IMR-90 (cell line): ENCODE measurements at regions of chr22 and their contacts with region 1.

Region 1: DNA sequence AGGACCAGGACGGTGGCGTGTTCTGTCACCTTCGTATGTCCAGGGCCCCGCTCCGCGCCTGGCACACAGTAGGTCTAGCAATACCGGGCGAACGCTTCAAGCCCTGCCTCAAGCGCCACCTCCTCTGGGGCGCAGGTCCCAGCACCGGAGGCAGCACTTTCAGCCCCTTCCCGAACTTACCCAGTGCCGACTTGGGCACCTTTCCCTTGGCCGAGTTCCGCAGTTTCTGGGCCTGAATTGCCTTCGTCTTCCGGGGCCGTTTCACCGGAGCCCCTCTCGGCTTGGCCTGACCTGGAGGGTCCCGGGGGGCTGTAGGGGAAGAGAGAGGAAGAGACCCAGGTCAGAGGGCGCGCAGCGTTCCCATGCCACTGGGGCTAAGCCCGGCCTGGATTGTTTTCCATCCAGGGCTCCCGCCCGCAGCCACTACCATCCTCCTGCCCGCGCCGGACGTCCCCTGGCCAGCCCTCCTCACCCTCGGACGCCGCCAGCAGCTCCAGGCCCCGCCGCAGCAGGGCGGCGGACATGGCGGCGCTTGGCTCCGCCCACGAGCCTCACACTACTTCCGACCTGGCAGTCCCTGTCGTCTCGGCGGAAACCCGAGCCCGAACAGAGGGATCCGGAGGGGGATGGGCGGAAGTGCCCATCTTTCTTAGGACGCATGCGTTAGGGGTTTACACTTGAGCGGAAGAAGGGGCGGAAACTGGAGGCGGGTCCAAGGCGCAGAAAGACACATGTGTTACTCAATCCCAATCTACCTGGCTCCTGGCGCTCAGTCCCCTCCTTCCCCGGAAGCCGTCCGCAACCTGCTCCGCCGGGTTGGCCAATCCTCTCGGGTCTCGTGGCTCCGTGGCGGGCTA is at the start of gene RPS19BP1:
- DNase-seq: peak; percentile 99
- ATAC-seq: peak; percentile 79
- H3K4me3 ChIP-seq: peak within 1 kb of the TSS; percentile 74
- H3K27ac ChIP-seq: peak within 1 kb of the TSS; percentile 85
- H3K4me1 ChIP-seq: peaks cover 7% of the 10 kb centered on the region
- H3K27me3 ChIP-seq: no peaks in the 10 kb centered on the region
- CTCF ChIP-seq: no peak
- POLR2A ChIP-seq: peak; percentile 78
- RAD21 ChIP-seq: no peak
- total RNA-seq, gene RPS19BP1: 33.0 and 33.6 TPM in 2 replicates

Region 2: GRCh38 chr22:39428578-39429071 is 103.8 kb before region 1 on chr22:
- CTCF ChIA-PET with region 1: no interaction called
- POLR2A ChIA-PET with region 1: no interaction called
- dilution Hi-C with region 1: no loop called
- in situ Hi-C with region 1: no loop called
- intact Hi-C with region 1: no loop called
- DNase-seq: no peak
- ATAC-seq: peak; percentile 70
- H3K4me3 ChIP-seq: no peak overlapping the region
- H3K27ac ChIP-seq: no peak overlapping the region
- H3K4me1 ChIP-seq: peaks cover 4% of the 10 kb centered on the region; the same call in 1 of the 2 replicates
- H3K27me3 ChIP-seq: no peaks in the 10 kb centered on the region
- CTCF ChIP-seq: no peak
- POLR2A ChIP-seq: no peak
- RAD21 ChIP-seq: no peak

Region 3: GRCh38 chr22:39490135-39490798 is 42.2 kb before region 1 on chr22:
- CTCF ChIA-PET with region 1: interaction called, 14 read pairs
- POLR2A ChIA-PET with region 1: no interaction called
- dilution Hi-C with region 1: no loop called
- in situ Hi-C with region 1: no loop called
- intact Hi-C with region 1: no loop called
- DNase-seq: peak; percentile 65
- ATAC-seq: peak; percentile 79
- H3K4me3 ChIP-seq: no peak overlapping the region
- H3K27ac ChIP-seq: no peak overlapping the region
- H3K4me1 ChIP-seq: peaks cover 8% of the 10 kb centered on the region
- H3K27me3 ChIP-seq: no peaks in the 10 kb centered on the region
- CTCF ChIP-seq: no peak
- POLR2A ChIP-seq: no peak
- RAD21 ChIP-seq: no peak

Region 4: DNA sequence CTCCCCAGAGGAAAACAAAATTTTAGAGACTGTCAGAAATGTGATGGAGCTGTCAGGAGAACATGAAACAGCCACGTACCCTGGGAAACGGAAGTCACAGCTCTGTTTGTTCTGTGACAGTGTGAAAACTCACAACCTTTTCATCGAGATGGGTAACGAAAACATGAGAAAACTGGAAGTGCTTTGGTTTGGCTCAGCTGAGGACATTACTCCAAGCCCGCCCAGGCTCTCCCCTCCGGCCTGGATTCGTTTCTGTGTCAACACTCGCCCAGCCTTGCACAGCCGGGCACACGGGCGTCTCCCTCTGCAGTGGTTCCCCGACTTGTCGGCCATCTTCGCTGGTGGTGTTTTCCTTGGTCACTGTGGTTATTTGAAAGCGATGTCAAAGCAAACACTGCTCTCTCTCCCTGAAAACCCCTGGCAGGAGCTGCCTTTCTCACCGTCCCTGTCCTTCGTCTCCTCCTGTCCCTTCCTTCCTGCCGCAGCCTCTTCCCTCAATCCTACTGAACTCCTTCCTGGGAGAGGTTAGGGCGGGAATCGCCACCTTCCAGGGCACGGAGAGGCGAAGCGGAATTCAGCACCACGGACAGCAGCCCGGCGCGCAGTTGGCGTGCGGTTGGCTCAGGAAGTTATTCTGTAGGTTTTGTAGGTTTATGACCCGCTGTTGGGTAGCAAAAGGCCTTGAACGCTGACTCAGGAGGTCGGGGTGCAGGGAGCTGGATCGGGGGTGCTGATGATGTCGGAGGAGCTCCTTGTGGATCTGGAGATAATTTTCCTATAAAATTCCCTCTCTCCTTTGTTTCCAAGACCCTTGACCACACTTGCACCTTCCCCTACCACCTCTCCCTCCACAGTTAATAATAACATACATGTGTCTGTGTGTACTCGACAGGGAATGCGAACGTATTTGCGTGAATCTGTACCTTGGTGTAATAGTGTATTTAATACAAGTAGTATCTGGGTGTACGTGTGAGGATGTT is 13.2 kb after region 1 on chr22:
- CTCF ChIA-PET with region 1: interaction called, 12 read pairs
- POLR2A ChIA-PET with region 1: interaction called, 5 read pairs
- dilution Hi-C with region 1: no loop called
- in situ Hi-C with region 1: no loop called
- intact Hi-C with region 1: no loop called
- DNase-seq: no peak
- ATAC-seq: peak; percentile 33; the same call in 1 of the 2 replicates
- H3K4me3 ChIP-seq: no peak overlapping the region
- H3K27ac ChIP-seq: no peak overlapping the region
- H3K4me1 ChIP-seq: peaks cover 3% of the 10 kb centered on the region; the same call in 1 of the 2 replicates
- H3K27me3 ChIP-seq: peaks cover 30% of the 10 kb centered on the region
- CTCF ChIP-seq: no peak
- POLR2A ChIP-seq: no peak
- RAD21 ChIP-seq: no peak

Region 5: GRCh38 chr22:40024201-40025061 is 492.0 kb after region 1 on chr22:
- CTCF ChIA-PET with region 1: interaction called, 29 read pairs
- POLR2A ChIA-PET with region 1: interaction called, 3 read pairs
- dilution Hi-C with region 1: no loop called
- in situ Hi-C with region 1: loop called (anchors 5 kb)
- intact Hi-C with region 1: loop called (anchors 1 kb)
- DNase-seq: peak; percentile 51
- ATAC-seq: peak; percentile 98
- H3K4me3 ChIP-seq: no peak overlapping the region
- H3K27ac ChIP-seq: no peak overlapping the region
- H3K4me1 ChIP-seq: no peaks in the 10 kb centered on the region
- H3K27me3 ChIP-seq: peaks cover 54% of the 10 kb centered on the region
- CTCF ChIP-seq: peak; percentile 97
- POLR2A ChIP-seq: peak; percentile 33; the same call in 1 of the 2 replicates
- RAD21 ChIP-seq: peak; percentile 97

Region 6: GRCh38 chr22:40036591-40037225 is 504.3 kb after region 1 on chr22:
- CTCF ChIA-PET with region 1: interaction called, 12 read pairs
- POLR2A ChIA-PET with region 1: interaction called, 4 read pairs
- dilution Hi-C with region 1: no loop called
- in situ Hi-C with region 1: no loop called
- intact Hi-C with region 1: no loop called
- DNase-seq: peak; percentile 76
- ATAC-seq: peak; percentile 96
- H3K4me3 ChIP-seq: no peak overlapping the region
- H3K27ac ChIP-seq: no peak overlapping the region
- H3K4me1 ChIP-seq: no peaks in the 10 kb centered on the region
- H3K27me3 ChIP-seq: peaks cover 59% of the 10 kb centered on the region
- CTCF ChIP-seq: peak; percentile 86
- POLR2A ChIP-seq: no peak
- RAD21 ChIP-seq: peak; percentile 92

Region 7: DNA sequence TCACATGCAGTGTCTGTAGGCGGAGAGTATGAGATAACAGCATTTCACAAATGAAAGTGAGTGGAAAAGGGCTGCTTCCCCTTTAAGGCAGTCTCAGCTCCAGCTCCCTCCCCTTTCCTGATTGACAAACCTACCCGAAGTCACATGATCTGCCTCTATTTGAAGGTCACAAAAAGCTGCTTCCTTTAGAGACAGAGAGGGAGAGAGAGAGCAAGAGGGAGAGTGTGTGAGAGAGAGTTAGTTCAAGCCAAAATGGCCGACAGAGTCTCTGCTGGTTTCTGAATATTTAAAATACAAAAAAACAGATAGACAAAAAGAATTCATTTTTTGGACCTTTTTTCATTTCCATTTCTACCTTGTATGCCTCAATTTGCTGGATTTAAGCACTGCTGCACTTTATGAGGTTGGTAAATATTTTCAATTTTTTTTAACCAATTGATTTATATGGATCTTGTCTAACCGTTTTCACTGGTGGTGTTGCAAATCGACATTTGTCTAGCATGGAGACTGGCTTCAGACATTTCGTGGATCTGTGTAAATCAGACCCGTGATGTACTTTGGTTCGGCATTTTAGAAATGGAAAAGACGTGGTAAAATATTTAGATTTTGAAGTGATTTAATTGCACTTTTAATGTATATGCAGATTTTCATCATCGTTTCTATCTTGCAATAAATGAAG is 645.4 kb after region 1 on chr22 and contains the start of gene TNRC6B:
- CTCF ChIA-PET with region 1: no interaction called
- POLR2A ChIA-PET with region 1: no interaction called
- dilution Hi-C with region 1: no loop called
- in situ Hi-C with region 1: loop called (anchors 10 kb)
- intact Hi-C with region 1: loop called (anchors 10 kb)
- DNase-seq: peak; percentile 98
- ATAC-seq: peak; percentile 83
- H3K4me3 ChIP-seq: peak within 1 kb of the TSS; percentile 60
- H3K27ac ChIP-seq: peak within 1 kb of the TSS; percentile 53
- H3K4me1 ChIP-seq: peaks cover 5% of the 10 kb centered on the region
- H3K27me3 ChIP-seq: no peaks in the 10 kb centered on the region
- CTCF ChIP-seq: no peak
- POLR2A ChIP-seq: peak; percentile 98
- RAD21 ChIP-seq: peak; percentile 23
- total RNA-seq, gene TNRC6B: 14.7 and 17.0 TPM in 2 replicates

Region 8: GRCh38 chr22:40183029-40183581 is 650.7 kb after region 1 on chr22:
- CTCF ChIA-PET with region 1: no interaction called
- POLR2A ChIA-PET with region 1: no interaction called
- dilution Hi-C with region 1: no loop called
- in situ Hi-C with region 1: loop called (anchors 10 kb)
- intact Hi-C with region 1: loop called (anchors 10 kb)
- DNase-seq: peak; percentile 87
- ATAC-seq: peak; percentile 89
- H3K4me3 ChIP-seq: no peak overlapping the region
- H3K27ac ChIP-seq: no peak overlapping the region; the same call in 1 of the 2 replicates
- H3K4me1 ChIP-seq: peaks cover 8% of the 10 kb centered on the region
- H3K27me3 ChIP-seq: no peaks in the 10 kb centered on the region
- CTCF ChIP-seq: no peak
- POLR2A ChIP-seq: no peak
- RAD21 ChIP-seq: no peak